HCT116 (cell line): ENCODE measurements at regions of chr10 and their contacts with region 1.

Region 1: DNA sequence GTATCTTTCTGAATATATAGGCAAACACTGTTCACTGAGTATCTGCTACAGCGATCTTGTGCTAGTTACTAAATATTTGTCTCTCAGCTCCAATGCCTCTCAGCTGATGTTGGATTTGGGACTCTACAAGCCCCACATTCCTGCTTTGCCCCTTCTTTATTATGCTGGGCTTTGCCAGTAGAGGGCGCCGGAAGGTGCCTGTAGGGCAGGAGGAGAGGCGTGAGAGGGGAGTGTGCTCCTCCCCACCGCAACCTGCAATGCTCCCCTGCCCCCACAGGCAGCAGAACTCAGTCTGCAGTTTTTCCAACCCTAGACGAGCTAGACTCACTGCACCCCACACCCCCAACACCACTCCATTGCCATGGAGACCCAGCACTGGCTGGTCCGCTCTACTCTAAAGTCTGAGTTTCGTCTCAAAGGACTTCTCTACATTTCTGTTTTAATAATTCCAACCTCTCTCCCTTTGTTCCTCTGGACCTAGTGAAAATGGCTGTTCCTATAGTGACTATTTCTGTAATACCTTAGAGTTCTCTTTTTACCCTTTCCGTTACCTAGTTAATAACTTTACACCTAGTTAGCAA is 337.6 kb downstream of the CCSER2 start:
- DNase-seq: peak; percentile 21
- ATAC-seq: peak; percentile 99
- H3K4me3 ChIP-seq: no peak overlapping the region
- H3K27ac ChIP-seq: no peak overlapping the region
- H3K4me1 ChIP-seq: no peaks in the 10 kb centered on the region
- H3K27me3 ChIP-seq: peaks cover 41% of the 10 kb centered on the region
- CTCF ChIP-seq: peak; percentile 56 to 89 (median 88); a peak in 5 of 6 replicates
- POLR2A ChIP-seq: no peak
- RAD21 ChIP-seq: peak; percentile 58

Region 2: GRCh38 chr10:84715911-84716310 is 49.9 kb after region 1 on chr10:
- CTCF ChIA-PET with region 1: no interaction called
- POLR2A ChIA-PET with region 1: no interaction called
- RAD21 ChIA-PET with region 1: no interaction called
- intact Hi-C with region 1: loop called (anchors 5 kb)
- DNase-seq: peak; percentile 31
- ATAC-seq: peak; percentile 98
- H3K4me3 ChIP-seq: no peak overlapping the region
- H3K27ac ChIP-seq: no peak overlapping the region
- H3K4me1 ChIP-seq: no peaks in the 10 kb centered on the region
- H3K27me3 ChIP-seq: peaks cover 36% of the 10 kb centered on the region
- CTCF ChIP-seq: peak; percentile 59 to 93 (median 88); a peak in 5 of 6 replicates
- POLR2A ChIP-seq: no peak
- RAD21 ChIP-seq: peak; percentile 54